Endothelial cell of umbilical vein (primary cell): ENCODE measurements at regions of chr5 and their contacts with region 1.

Region 1: DNA sequence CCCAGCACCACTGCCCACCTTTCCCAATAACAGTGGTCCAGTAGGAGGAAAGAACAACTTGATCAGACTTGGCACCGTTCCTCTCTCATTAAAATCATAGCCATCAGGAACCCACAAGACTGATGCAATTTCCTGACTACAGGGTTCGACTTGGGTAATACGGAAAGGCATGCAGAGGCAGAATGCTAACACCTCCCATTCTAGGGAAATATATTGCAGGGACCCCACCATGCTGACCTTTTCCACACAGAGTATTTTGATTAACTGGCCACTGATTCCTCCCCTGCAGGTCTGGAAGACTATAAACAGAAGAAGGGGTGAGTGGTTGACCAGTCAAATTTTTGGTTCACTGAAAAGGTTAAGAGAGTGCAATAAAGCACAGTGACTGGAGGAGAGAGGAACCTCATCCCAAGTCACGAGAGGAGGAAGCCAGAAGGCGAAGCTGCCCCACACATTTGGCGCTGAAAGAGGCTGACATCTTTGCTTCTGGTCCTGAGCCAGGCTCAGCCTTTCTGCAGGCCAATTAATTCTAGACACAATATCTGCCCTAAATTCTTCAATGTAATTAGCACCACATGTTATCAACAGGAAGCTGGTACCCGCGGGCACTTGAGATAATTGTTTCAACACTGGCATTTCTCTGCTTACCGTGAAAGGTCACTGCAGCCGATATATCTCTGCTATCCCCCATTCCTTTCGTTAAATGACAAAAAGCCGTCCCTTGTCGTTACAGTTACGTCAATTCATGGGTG is 64.7 kb upstream of the SPOCK1 start:
- DNase-seq: peak; percentile 95
- H3K4me3 ChIP-seq: peak overlapping the region in 1 of 3 experiments; percentile 0
- H3K27ac ChIP-seq: peak overlapping the region; percentile 83
- H3K4me1 ChIP-seq: peaks cover 40% of the 10 kb centered on the region
- H3K27me3 ChIP-seq: no peaks in the 10 kb centered on the region
- CTCF ChIP-seq: no peak
- POLR2A ChIP-seq: no peak

Region 2: DNA sequence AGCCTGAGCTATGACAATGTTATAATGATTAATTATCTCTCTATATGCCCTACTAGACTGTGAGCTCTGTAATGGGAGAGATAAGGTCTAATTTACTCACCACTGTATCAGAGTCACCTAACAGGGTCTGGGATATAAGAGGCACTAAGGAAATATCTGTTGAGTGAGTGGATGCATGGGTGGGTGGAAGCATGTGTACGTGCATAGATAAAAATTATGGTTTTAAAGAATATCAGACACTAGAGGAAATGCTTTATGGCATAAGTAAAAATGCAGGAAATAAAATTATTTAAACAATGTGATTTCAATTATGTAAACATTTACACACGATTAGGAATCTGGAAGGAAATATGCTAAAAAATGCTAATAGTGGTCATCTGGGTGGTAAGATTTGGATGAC is 202.5 kb before region 1 on chr5:
- CTCF ChIA-PET with region 1: interaction called, 3 read pairs
- POLR2A ChIA-PET with region 1: no interaction called
- dilution Hi-C with region 1: no loop called
- intact Hi-C with region 1: loop called (anchors 5 kb)
- DNase-seq: peak; percentile 94
- H3K4me3 ChIP-seq: no peak overlapping the region
- H3K27ac ChIP-seq: peak overlapping the region; percentile 100
- H3K4me1 ChIP-seq: peaks cover 40% of the 10 kb centered on the region
- H3K27me3 ChIP-seq: no peaks in the 10 kb centered on the region
- CTCF ChIP-seq: no peak
- POLR2A ChIP-seq: peak; percentile 53

Region 3: GRCh38 chr5:137575847-137576246 is 12.0 kb after region 1 on chr5:
- CTCF ChIA-PET with region 1: interaction called, 4 read pairs
- POLR2A ChIA-PET with region 1: no interaction called
- dilution Hi-C with region 1: no loop called
- intact Hi-C with region 1: loop called (anchors 1 kb)
- DNase-seq: peak; percentile 57
- H3K4me3 ChIP-seq: no peak overlapping the region
- H3K27ac ChIP-seq: no peak overlapping the region
- H3K4me1 ChIP-seq: peaks cover 16% of the 10 kb centered on the region
- H3K27me3 ChIP-seq: peaks cover 0 to 7% of the 10 kb centered on the region in 2 experiments
- CTCF ChIP-seq: no peak
- POLR2A ChIP-seq: no peak

Region 4: GRCh38 chr5:137613554-137614265 is 49.9 kb after region 1 on chr5:
- CTCF ChIA-PET with region 1: no interaction called
- POLR2A ChIA-PET with region 1: no interaction called
- dilution Hi-C with region 1: no loop called
- intact Hi-C with region 1: no loop called
- DNase-seq: no peak
- H3K4me3 ChIP-seq: no peak overlapping the region
- H3K27ac ChIP-seq: no peak overlapping the region
- H3K4me1 ChIP-seq: no peaks in the 10 kb centered on the region
- H3K27me3 ChIP-seq: no peaks in the 10 kb centered on the region
- CTCF ChIP-seq: no peak
- POLR2A ChIP-seq: no peak

Region 5: GRCh38 chr5:137735555-137736284 is 171.9 kb after region 1 on chr5 and contains the start of gene KLHL3:
- CTCF ChIA-PET with region 1: no interaction called
- POLR2A ChIA-PET with region 1: no interaction called
- dilution Hi-C with region 1: no loop called
- intact Hi-C with region 1: loop called (anchors 5 kb)
- DNase-seq: peak; percentile 81
- H3K4me3 ChIP-seq: peak within 1 kb of the TSS; percentile 56 to 74 (median 64)
- H3K27ac ChIP-seq: peak within 1 kb of the TSS; percentile 76
- H3K4me1 ChIP-seq: peaks cover 40% of the 10 kb centered on the region
- H3K27me3 ChIP-seq: no peaks in the 10 kb centered on the region
- CTCF ChIP-seq: peak; percentile 16 to 26
- POLR2A ChIP-seq: peak; percentile 71
- total RNA-seq, gene KLHL3: 13.6 and 13.9 TPM in 2 replicates